Right cardiac atrium (tissue), 5 donors: ENCODE measurements at regions of chr4 and their contacts with region 1.

Region 1: DNA sequence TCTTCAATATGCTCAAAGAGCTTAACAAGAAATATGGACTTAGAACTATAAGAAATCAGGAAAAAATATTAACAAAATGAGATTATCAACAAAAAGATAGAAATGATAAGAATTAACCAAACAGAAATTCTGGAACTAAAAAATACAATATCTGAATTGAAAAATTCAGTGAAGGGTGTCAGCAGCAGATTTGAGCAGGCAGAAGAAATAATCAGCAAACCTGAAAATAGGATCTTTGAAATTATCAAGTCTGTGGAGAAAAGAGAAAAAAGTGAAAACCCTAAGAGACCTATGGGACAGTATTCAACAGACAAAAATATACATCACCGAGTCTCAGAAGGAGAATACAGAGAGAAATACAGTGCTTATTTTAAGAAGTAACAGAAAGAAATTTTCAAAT is 877.8 kb upstream of the AGA start:
- DNase-seq: no peak
- ATAC-seq: no peak
- H3K4me3 ChIP-seq: no peak overlapping the region
- H3K27ac ChIP-seq: no peak overlapping the region
- H3K4me1 ChIP-seq: no peaks in the 10 kb centered on the region
- H3K27me3 ChIP-seq: no peaks in the 10 kb centered on the region

Region 2: DNA sequence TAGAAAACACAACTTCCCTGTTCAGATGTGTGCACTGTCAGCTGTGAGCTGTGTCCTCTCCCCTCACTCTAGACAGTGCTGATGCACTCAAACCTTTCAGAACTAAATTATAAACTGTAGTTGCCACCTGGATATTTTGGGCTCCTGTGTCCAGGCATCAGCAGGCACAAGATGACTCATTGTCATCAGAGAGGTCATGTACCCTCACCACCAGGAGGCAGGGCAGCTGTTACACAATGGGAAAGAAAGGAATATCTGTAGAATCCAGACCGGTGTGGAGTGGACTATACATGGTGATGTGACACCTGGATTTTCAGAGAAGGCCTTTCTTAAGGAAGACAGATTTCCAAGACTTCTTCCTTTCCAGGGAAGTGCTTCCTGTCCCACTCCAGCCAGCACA is 23.3 kb before region 1 on chr4:
- intact Hi-C with region 1: loop called in 1 of 4 experiments (anchors 2 kb)
- DNase-seq: no peak
- ATAC-seq: no peak
- H3K4me3 ChIP-seq: no peak overlapping the region
- H3K27ac ChIP-seq: no peak overlapping the region
- H3K4me1 ChIP-seq: no peaks in the 10 kb centered on the region
- H3K27me3 ChIP-seq: no peaks in the 10 kb centered on the region

Region 3: DNA sequence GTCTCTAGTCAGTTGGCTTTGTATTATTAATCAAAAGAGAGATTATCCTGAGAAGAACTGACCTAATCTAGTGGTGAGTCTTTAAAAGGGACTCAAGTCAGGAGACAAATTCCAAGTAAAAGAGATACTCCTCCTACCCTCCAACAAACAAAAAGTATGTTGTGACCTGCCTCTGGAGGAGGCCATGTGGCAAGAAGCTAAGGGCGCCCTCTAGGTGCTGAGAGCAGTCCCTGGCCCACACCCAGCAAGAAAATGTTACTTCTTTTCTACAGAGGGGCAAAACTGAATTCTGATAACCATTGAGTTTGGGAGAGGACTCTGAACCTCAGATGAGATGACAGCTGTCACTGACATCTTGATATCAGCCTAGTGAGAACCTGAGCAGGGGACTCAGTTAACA is 75.8 kb after region 1 on chr4:
- intact Hi-C with region 1: no loop called
- DNase-seq: no peak
- ATAC-seq: no peak
- H3K4me3 ChIP-seq: no peak overlapping the region
- H3K27ac ChIP-seq: no peak overlapping the region
- H3K4me1 ChIP-seq: no peaks in the 10 kb centered on the region
- H3K27me3 ChIP-seq: no peaks in the 10 kb centered on the region